Activated CD4-positive, alpha-beta memory T cell treated with anti-CD3 and anti-CD28 coated beads for 36 hours (primary cell): ENCODE measurements at regions of chr12 and their contacts with region 1.

Region 1: GRCh38 chr12:54398995-54399793 is 14.7 kb upstream of the ZNF385A start:
- DNase-seq: peak; percentile 92
- H3K4me3 Mint-ChIP-seq: no peak overlapping the region
- H3K27ac Mint-ChIP-seq: no peak overlapping the region
- H3K4me1 Mint-ChIP-seq: peaks cover 9% of the 10 kb centered on the region
- H3K27me3 Mint-ChIP-seq: no peaks in the 10 kb centered on the region

Region 2: GRCh38 chr12:53956251-53956887 is 442.8 kb before region 1 on chr12:
- CTCF ChIA-PET with region 1: no interaction called
- POLR2A ChIA-PET with region 1: no interaction called
- intact Hi-C with region 1: no loop called
- DNase-seq: no peak
- H3K4me3 Mint-ChIP-seq: no peak overlapping the region
- H3K27ac Mint-ChIP-seq: no peak overlapping the region
- H3K4me1 Mint-ChIP-seq: peaks cover 20% of the 10 kb centered on the region
- H3K27me3 Mint-ChIP-seq: peaks cover 80% of the 10 kb centered on the region

Region 3: DNA sequence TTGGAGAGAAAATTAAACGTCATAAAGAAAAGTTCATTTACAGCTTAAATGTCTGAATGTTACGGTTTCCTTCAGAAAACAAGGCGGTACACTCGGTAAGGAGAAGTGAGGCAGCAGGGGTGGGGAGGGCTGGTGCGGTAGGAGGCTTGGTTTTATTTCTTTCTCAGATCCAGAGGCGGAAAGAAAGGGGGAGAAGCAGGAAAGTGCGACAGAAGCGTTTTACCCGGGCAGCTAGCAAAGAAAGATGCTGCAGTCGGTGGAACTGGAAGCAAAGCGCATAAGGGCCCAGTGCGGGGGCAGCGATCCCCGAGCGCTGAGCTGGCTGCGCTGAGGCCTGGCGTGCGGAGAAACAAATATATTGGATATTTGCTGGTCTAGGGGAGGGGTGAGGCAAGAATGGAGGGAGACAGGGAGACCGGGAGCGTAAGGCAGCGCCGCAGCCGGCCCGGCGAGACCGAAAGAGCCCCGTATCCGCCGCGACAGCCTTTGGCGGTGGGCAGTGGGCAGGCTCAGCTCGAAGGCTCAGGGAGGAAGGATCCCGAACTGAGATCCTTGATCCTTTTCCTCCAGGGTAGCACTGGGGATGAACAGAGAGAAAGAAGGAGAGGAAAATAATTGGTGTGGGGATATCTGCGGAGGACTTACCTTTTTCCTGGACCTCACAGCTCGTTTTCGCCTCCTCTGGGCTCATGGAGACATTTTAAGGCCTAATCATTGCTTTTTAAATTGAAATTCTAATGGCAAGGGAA is 432.6 kb before region 1 on chr12:
- CTCF ChIA-PET with region 1: no interaction called
- POLR2A ChIA-PET with region 1: no interaction called
- intact Hi-C with region 1: no loop called
- DNase-seq: no peak
- H3K4me3 Mint-ChIP-seq: no peak overlapping the region
- H3K27ac Mint-ChIP-seq: no peak overlapping the region
- H3K4me1 Mint-ChIP-seq: peaks cover 33% of the 10 kb centered on the region
- H3K27me3 Mint-ChIP-seq: peaks cover 89% of the 10 kb centered on the region

Region 4: GRCh38 chr12:54201001-54201794 is 198.0 kb before region 1 on chr12:
- CTCF ChIA-PET with region 1: no interaction called
- POLR2A ChIA-PET with region 1: no interaction called
- intact Hi-C with region 1: no loop called
- DNase-seq: peak; percentile 77
- H3K4me3 Mint-ChIP-seq: no peak overlapping the region
- H3K27ac Mint-ChIP-seq: no peak overlapping the region
- H3K4me1 Mint-ChIP-seq: peaks cover 3% of the 10 kb centered on the region
- H3K27me3 Mint-ChIP-seq: peaks cover 48% of the 10 kb centered on the region

Region 5: DNA sequence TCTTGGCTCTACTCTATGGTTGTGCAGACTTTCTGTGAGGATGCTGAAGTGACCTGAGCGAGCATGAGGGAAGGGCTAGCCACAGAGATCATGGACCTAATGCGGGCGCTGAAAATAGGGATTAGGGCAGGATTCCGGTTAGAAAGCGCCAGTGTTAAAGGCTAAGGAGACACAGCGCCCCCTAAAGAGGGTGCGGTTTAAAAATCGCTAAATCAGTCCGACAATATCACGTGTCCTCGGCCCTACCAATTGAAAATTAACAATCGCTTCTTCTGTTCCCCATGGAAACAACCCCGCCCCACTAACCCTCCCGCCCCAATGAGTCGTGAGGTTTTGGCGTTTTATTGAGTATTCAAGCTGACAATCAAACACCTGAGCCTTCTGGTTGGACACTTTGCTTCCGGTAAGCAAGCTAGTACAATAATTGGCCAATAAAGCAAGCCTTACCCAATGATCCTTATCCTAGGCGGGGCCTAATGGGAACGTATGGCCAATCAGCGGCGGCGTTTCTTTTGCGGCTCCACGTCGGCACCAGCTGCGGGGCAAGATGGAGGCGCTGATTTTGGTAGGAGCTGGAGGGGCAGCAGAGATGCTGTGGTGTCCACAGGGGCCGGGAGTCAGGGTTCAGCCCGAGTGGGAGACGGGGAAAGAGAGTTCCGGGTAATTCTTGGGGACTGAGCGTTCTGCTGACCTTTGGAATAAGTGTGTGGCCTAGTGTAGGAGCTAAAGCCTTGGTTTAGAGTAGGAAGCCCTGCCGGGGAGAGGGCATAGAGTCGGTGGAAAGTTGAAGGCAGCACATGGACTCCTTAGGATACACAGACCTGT is 74.4 kb before region 1 on chr12 and contains the start of gene COPZ1:
- CTCF ChIA-PET with region 1: interaction called, 11 read pairs
- POLR2A ChIA-PET with region 1: no interaction called
- intact Hi-C with region 1: no loop called
- DNase-seq: peak; percentile 97
- H3K4me3 Mint-ChIP-seq: peak within 1 kb of the TSS; percentile 95
- H3K27ac Mint-ChIP-seq: peak within 1 kb of the TSS; percentile 84
- H3K4me1 Mint-ChIP-seq: peaks cover 33% of the 10 kb centered on the region
- H3K27me3 Mint-ChIP-seq: no peaks in the 10 kb centered on the region
- total RNA-seq, gene COPZ1: 99.0 to 110 TPM

Region 6: GRCh38 chr12:54388235-54389138 is 10.7 kb before region 1 on chr12:
- CTCF ChIA-PET with region 1: interaction called, 27 read pairs
- POLR2A ChIA-PET with region 1: interaction called, 3 read pairs
- intact Hi-C with region 1: no loop called
- DNase-seq: no peak
- H3K4me3 Mint-ChIP-seq: no peak overlapping the region
- H3K27ac Mint-ChIP-seq: no peak overlapping the region
- H3K4me1 Mint-ChIP-seq: peaks cover 14% of the 10 kb centered on the region
- H3K27me3 Mint-ChIP-seq: no peaks in the 10 kb centered on the region

Region 7: GRCh38 chr12:54431911-54432814 is 33.0 kb after region 1 on chr12:
- CTCF ChIA-PET with region 1: interaction called, 693 read pairs
- POLR2A ChIA-PET with region 1: interaction called, 22 read pairs
- intact Hi-C with region 1: no loop called
- DNase-seq: peak; percentile 68
- H3K4me3 Mint-ChIP-seq: no peak overlapping the region
- H3K27ac Mint-ChIP-seq: no peak overlapping the region
- H3K4me1 Mint-ChIP-seq: peaks cover 20% of the 10 kb centered on the region
- H3K27me3 Mint-ChIP-seq: peaks cover 1% of the 10 kb centered on the region

Region 8: DNA sequence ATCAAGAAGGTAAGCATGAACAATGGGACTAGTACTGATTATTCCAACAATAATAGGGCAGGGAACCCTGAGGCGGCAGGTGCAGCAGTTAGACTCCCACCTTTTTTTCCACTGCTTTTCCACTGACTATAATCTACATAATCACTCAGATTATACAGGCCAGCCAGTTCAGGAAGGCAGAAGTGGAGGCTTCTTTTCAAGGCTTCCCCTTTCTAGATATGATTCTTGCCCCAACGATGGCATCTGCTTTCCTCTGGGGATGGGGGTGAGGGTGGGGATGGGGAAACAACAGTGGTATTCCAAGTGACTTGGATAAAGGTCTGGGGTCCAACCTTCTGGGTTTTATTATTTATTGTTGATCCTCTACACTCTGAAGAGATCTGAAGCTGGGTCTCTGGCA is 98.7 kb after region 1 on chr12:
- CTCF ChIA-PET with region 1: interaction called, 19 read pairs
- POLR2A ChIA-PET with region 1: interaction called, 7 read pairs
- intact Hi-C with region 1: no loop called
- DNase-seq: no peak
- H3K4me3 Mint-ChIP-seq: peak overlapping the region; percentile 100
- H3K27ac Mint-ChIP-seq: peak overlapping the region; percentile 98
- H3K4me1 Mint-ChIP-seq: peaks cover 40% of the 10 kb centered on the region
- H3K27me3 Mint-ChIP-seq: no peaks in the 10 kb centered on the region

Region 9: DNA sequence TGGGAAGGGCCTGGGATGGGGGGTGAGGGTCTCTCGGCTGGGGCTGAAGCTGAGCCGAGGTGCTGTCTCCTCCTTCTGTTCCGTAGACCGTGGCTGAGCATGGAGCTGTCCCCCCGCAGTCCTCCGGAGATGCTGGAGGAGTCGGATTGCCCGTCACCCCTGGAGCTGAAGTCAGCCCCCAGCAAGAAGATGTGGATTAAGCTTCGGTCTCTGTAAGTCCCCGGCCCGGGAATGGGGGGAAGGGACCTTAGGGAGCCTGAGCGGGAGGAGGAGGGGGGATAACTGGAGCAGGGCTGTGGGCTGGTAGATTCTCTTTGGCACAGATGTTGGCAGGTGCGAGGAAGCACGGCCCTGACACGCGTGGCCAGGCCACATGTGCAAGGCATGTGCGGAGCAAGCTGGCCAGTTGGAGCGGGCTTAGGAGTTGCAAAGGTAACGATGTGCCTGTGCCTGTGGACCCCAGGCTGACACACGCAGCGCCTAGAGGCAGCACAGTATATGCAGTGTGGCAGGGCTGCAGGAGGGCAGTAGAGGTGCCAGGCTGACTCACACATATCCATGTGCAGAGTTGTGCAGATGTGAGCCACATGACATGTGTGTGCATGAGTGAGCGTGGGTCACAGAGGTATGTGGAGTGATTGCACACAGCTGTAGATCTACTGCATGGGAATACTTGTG is 150.7 kb after region 1 on chr12:
- CTCF ChIA-PET with region 1: interaction called, 10 read pairs
- POLR2A ChIA-PET with region 1: no interaction called
- intact Hi-C with region 1: no loop called
- DNase-seq: peak; percentile 58
- H3K4me3 Mint-ChIP-seq: peak overlapping the region; percentile 73
- H3K27ac Mint-ChIP-seq: no peak overlapping the region
- H3K4me1 Mint-ChIP-seq: peaks cover 37% of the 10 kb centered on the region
- H3K27me3 Mint-ChIP-seq: no peaks in the 10 kb centered on the region